Activated CD4-positive, alpha-beta memory T cell treated with anti-CD3 and anti-CD28 coated beads, Interleukin-2, amount 10 ng/mL, durations not matched to agents 7 days and 5 days (primary cell): ENCODE measurements at regions of chr5 and their contacts with region 1.

Region 1: GRCh38 chr5:116947691-116948528 is 373.3 kb upstream of the SEMA6A start:
- DNase-seq: peak; percentile 57
- H3K4me3 Mint-ChIP-seq: no peak overlapping the region
- H3K27ac Mint-ChIP-seq: no peak overlapping the region
- H3K4me1 Mint-ChIP-seq: no peaks in the 10 kb centered on the region
- H3K27me3 Mint-ChIP-seq: no peaks in the 10 kb centered on the region

Region 2: DNA sequence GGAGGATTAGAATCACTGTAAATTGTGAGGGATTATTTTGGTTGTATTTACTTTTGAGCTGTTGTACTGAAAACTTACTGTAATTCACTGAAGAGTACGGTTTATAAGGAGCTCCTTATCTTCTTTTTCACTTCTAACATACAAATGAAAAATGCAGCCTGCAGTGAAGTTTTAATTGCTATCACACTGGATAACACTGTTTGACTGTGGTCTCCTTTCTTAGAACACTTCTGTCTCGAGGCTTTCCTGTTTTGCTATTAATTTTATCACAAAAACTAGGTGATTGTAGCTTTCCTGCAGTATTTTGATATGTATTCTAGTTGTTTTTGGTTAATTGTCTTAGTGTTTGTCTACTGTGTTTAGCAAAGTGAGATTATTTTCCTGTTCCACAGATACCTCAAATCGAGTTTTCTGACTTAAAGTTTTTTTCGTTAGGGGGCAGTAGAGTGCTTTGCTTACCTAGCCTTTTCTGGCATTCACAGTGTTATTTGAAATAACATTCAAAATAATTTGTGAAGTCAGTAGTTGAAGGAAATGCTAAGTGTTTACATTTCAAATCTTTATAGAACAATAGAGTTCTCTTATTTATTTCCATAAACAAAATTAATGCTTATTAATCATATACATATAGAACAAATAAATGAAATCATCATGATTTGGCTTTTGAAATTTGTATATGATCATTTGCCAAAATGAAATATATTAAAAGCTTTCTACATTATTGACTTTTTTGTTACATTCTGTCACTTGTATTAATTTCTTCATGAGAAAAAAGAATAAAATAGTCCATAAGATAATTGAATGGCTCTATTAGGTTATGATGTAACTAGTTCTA is 810.1 kb before region 1 on chr5:
- CTCF ChIA-PET with region 1: interaction called, 10 read pairs
- POLR2A ChIA-PET with region 1: no interaction called
- DNase-seq: no peak
- H3K4me3 Mint-ChIP-seq: no peak overlapping the region
- H3K27ac Mint-ChIP-seq: no peak overlapping the region
- H3K4me1 Mint-ChIP-seq: peaks cover 5% of the 10 kb centered on the region
- H3K27me3 Mint-ChIP-seq: no peaks in the 10 kb centered on the region